Activated CD4-positive, alpha-beta T cell treated with anti-CD3 and anti-CD28 coated beads for 36 hours (primary cell): ENCODE measurements at regions of chr6 and their contacts with region 1.

Region 1: GRCh38 chr6:73461537-73462350 is at the start of gene MTO1:
- DNase-seq: peak; percentile 92
- ATAC-seq: peak; percentile 96
- H3K4me3 Mint-ChIP-seq: peak within 1 kb of the TSS; percentile 93
- H3K27ac Mint-ChIP-seq: peak within 1 kb of the TSS; percentile 100
- H3K4me1 Mint-ChIP-seq: peaks cover 37% of the 10 kb centered on the region
- H3K27me3 Mint-ChIP-seq: no peaks in the 10 kb centered on the region
- total RNA-seq, gene MTO1: 45.0 to 49.7 TPM

Region 2: DNA sequence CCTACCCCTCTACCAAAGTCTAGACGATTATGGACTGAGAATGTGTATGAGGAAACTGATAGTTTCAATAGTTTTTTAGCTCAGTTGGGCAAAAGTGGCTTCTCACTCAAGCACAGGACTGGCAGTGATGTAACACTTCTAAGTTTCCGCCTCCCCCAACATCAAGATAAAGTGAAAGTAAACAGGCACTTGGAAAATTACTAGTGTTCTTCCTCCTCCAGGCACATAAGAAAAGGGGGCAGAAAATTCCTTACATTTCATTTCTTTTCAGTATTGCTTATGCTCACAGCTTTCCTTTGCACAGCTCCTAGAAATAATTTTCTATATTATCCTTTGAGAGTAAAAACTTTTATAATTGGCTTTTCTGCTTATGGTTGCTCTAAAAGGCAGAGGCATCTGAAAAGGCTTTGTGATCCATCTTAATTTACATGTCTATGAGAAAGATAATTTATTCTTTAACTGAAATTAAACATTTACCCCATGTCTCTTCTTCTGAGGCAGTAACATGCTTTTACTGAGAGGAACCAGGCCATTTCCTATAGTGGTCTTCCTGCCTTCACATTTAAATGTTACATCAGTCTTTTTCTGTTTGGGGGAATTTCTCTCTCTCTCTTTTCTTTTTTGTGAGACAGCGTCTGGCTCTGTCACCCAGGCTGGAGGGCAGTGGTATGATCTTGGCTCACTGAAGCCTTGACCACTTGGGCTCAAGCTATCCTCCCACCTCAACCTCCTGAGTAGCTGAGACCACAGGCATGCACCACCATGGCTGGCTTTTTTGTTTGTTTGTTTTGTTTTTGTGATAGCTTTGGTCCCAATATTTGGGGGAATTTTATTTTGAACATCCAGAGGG is 124.0 kb after region 1 on chr6:
- CTCF ChIA-PET with region 1: interaction called, 3 read pairs
- POLR2A ChIA-PET with region 1: interaction called, 5 read pairs
- intact Hi-C with region 1: loop called (anchors 5 to 10 kb)
- DNase-seq: peak; percentile 55
- ATAC-seq: peak; percentile 79
- H3K4me3 Mint-ChIP-seq: peak overlapping the region; percentile 73
- H3K27ac Mint-ChIP-seq: peak overlapping the region; percentile 99
- H3K4me1 Mint-ChIP-seq: peaks cover 18% of the 10 kb centered on the region
- H3K27me3 Mint-ChIP-seq: no peaks in the 10 kb centered on the region